ENCODE measurements at regions of chr1 and their contacts with region 1.

Region 1: DNA sequence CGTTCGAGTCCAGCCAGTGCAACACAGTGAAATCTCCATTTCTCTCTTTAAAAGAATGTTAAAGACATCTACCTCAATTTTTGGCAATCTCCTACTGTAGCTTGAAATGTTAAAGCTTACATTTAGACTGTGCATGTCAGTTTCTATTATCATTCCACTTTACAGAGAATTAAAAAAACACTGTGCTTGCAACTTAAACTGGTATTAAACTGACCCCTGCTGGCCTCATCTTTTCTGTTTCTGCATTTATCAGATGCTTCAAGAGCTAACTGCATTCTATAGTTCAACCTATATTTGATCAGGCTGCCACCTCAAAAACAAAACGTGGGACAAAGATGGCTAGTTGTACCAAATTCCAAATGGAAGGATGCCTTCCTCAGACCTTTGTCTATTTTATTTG is 226.5 kb downstream of the SMYD3 start:
- DNase-seq: peak; percentile 25
- H3K4me3 ChIP-seq: no peak overlapping the region
- H3K27ac ChIP-seq: peak overlapping the region in 1 of 2 experiments; percentile 58; a peak in 1 of 4 replicates
- H3K4me1 ChIP-seq: peaks cover 0 to 13% of the 10 kb centered on the region in 2 experiments; a peak in 2 of 4 replicates
- H3K27me3 ChIP-seq: no peaks in the 10 kb centered on the region
- CTCF ChIP-seq: peak; percentile 70
- EP300 ChIP-seq: no peak
- RAD21 ChIP-seq: peak; percentile 84

Region 2: DNA sequence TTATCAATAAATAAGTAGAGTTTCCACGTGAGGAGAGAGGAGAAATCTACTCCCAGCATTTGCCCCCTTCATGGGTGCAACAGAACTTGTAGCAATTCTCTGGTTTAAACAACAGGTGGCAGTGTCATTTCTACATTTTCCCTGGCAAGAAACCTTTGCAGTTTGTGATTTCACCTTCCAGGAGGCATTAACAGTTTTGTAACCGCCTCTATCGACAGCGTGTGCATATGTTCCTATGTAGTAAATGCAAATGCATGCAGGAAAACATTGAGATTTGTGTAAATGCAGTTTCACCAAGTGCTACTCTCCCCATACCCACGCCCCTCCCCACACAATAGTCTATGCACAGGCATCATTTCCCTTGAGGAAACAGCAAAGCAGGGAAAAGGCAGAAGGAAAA is 268.2 kb before region 1 on chr1:
- CTCF ChIA-PET with region 1: interaction called, 23 read pairs
- POLR2A ChIA-PET with region 1: no interaction called
- DNase-seq: peak; percentile 58
- H3K4me3 ChIP-seq: no peak overlapping the region
- H3K27ac ChIP-seq: no peak overlapping the region
- H3K4me1 ChIP-seq: no peaks in the 10 kb centered on the region
- H3K27me3 ChIP-seq: no peaks in the 10 kb centered on the region
- CTCF ChIP-seq: peak; percentile 68
- EP300 ChIP-seq: no peak
- RAD21 ChIP-seq: peak; percentile 87

Region 3: DNA sequence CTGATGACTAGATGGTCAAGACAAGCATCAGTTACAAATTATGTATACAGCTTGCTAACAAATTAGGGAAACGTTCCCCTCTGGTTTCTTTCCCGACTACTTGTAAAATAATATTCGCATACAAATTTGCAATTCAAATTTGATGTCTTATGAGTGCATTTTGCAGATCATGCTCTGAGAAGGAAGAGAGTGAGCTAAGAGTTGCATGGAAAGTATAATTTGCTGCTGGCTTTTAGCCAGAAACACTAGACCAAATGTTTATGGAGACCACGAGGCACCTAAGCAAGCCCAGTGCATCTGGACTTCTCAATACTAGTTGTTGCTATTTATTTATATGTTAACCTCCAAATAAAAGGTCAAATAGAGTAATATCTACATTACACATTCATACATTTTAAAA is 10.6 kb after region 1 on chr1:
- CTCF ChIA-PET with region 1: interaction called, 10 read pairs
- POLR2A ChIA-PET with region 1: no interaction called
- DNase-seq: no peak
- H3K4me3 ChIP-seq: no peak overlapping the region
- H3K27ac ChIP-seq: no peak overlapping the region
- H3K4me1 ChIP-seq: peaks cover 3 to 11% of the 10 kb centered on the region in 2 experiments; a peak in 1 of 4 replicates
- H3K27me3 ChIP-seq: no peaks in the 10 kb centered on the region
- CTCF ChIP-seq: no peak
- EP300 ChIP-seq: no peak
- RAD21 ChIP-seq: no peak